ENCODE measurements at regions of chr4 and their contacts with region 1.

Region 1: GRCh38 chr4:26319467-26319948 is 1.3 kb upstream of the RBPJ start:
- DNase-seq: peak; percentile 100
- H3K4me3 ChIP-seq: peak overlapping the region; percentile 76 to 84 (median 79)
- H3K27ac ChIP-seq: peak overlapping the region; percentile 80
- H3K4me1 ChIP-seq: peaks cover 23% of the 10 kb centered on the region
- H3K27me3 ChIP-seq: no peaks in the 10 kb centered on the region
- CTCF ChIP-seq: no peak
- POLR2A ChIP-seq: no peak

Region 2: GRCh38 chr4:25862411-25863346 is 456.8 kb before region 1 on chr4 and contains the start of gene SEL1L3:
- CTCF ChIA-PET with region 1: no interaction called
- POLR2A ChIA-PET with region 1: interaction called, 3 read pairs
- dilution Hi-C with region 1: no loop called
- intact Hi-C with region 1: loop called (anchors 5 kb)
- DNase-seq: no peak
- H3K4me3 ChIP-seq: peak within 1 kb of the TSS; percentile 52 to 92 (median 80)
- H3K27ac ChIP-seq: peak within 1 kb of the TSS; percentile 74
- H3K4me1 ChIP-seq: peaks cover 38% of the 10 kb centered on the region
- H3K27me3 ChIP-seq: no peaks in the 10 kb centered on the region
- CTCF ChIP-seq: no peak
- POLR2A ChIP-seq: no peak
- total RNA-seq, gene SEL1L3: 91.1 and 122 TPM in 2 replicates

Region 3: DNA sequence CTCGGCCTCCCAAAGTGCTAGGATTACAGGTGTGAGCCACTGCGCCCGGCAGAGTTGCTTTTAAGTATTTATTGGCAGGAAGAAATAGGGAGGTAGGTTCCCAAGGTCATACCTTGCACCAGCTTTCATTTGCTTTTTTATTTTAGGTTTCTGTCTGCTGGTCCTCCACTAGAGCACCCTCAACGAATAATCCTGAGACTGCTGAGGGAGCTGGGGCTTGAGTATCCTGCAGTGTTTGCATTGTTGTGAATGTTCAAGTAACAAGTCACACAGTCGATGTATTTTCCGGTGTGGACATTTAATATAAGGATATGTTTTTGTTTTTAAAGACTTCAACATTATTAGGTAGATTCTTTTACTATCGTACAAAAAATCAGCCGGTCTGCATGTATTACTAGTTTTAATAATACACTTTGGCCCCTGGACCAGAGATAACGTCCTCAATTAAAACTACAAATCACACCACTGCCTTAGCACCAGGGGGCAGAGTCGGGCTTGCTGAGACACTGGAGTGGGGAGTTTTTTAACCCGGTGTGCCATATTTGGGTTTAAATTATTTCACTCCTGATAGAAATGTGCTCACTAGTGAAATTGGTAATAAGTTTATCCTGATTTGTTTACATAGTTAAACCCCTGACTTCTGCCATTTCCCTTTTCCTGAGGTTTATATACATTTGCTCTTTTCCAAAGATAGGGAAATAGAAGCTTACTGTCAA is 393.9 kb before region 1 on chr4:
- CTCF ChIA-PET with region 1: no interaction called
- POLR2A ChIA-PET with region 1: no interaction called
- dilution Hi-C with region 1: no loop called
- intact Hi-C with region 1: loop called (anchors 5 kb)
- DNase-seq: peak; percentile 29
- H3K4me3 ChIP-seq: no peak overlapping the region
- H3K27ac ChIP-seq: no peak overlapping the region
- H3K4me1 ChIP-seq: no peaks in the 10 kb centered on the region
- H3K27me3 ChIP-seq: no peaks in the 10 kb centered on the region
- CTCF ChIP-seq: peak; percentile 53 to 58
- POLR2A ChIP-seq: no peak

Region 4: GRCh38 chr4:25986807-25987206 is 332.7 kb before region 1 on chr4:
- CTCF ChIA-PET with region 1: interaction called, 6 read pairs
- POLR2A ChIA-PET with region 1: no interaction called
- dilution Hi-C with region 1: no loop called
- intact Hi-C with region 1: loop called (anchors 5 kb)
- DNase-seq: no peak
- H3K4me3 ChIP-seq: no peak overlapping the region
- H3K27ac ChIP-seq: no peak overlapping the region
- H3K4me1 ChIP-seq: no peaks in the 10 kb centered on the region
- H3K27me3 ChIP-seq: peaks cover 0 to 2% of the 10 kb centered on the region in 2 experiments
- CTCF ChIP-seq: no peak
- POLR2A ChIP-seq: no peak

Region 5: DNA sequence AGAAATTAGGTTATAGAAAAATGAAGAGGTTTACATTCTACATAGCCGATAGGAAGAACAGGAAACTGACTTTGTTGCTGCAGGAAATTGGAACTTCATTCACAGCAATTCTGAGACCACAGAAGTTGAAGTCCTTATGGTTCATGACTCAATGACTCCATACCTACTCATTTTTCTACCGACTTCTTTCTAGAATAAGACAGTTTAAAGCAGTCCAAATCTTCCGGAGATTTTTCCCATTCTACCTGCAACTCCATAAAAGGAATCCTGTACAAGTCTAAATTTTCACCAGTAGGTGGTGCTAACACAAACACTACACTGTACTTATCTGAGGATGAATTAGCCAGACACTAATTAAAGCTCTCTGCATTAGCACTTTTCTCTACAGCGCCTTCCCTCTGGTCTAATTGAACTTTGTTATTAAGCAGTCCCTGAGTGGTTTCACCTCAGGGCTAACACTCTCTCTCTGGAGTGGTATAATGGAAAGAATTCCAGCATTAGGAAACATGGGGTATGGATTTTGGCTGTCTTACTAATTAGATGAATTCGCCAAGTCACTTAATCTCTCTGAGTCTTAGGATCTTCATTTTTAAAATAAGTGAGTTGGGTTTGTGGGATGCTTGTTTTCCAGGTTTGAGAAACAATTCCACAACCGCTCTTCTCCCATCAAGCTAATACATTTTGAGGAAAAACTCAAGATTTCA is 237.6 kb before region 1 on chr4:
- CTCF ChIA-PET with region 1: interaction called, 4 read pairs
- POLR2A ChIA-PET with region 1: no interaction called
- dilution Hi-C with region 1: no loop called
- intact Hi-C with region 1: loop called (anchors 2 kb)
- DNase-seq: peak; percentile 58
- H3K4me3 ChIP-seq: no peak overlapping the region
- H3K27ac ChIP-seq: no peak overlapping the region
- H3K4me1 ChIP-seq: no peaks in the 10 kb centered on the region
- H3K27me3 ChIP-seq: peaks cover 0 to 2% of the 10 kb centered on the region in 2 experiments
- CTCF ChIP-seq: peak; percentile 46 to 51
- POLR2A ChIP-seq: no peak

Region 6: DNA sequence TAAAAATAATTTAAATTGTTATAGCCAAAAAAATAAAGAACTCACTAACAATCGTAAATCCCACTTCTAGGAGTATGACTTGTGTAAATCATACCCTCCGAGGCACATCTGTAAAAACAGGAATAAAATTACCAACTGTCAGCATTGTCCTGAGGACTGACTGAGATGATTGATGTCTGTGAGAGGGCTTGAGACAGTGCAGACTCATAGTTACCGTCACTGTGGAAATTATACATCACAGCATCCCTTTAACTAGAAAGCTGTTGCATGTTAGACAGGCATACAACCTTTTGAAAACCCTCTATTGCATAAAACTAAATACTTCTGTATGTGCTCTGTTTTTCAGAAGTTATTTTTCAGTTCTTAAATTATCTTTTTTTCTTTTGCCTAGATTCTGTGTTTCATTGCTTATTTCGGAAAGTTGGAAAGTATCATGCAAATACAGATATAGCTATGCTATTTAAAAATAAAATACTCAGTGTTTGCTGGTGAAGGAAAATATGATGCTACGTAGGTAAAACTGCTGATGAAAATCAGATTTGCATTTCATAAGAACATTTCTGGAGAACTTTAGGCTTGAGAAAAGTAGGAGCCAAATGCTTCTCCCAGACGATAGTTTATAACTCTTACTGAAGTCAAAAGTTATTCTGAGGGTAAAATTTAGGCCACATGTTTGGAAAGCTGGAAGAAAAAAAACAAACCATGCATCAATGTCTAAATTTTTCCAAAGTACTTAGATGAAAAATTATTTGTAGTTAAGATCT is 12.3 kb before region 1 on chr4:
- CTCF ChIA-PET with region 1: no interaction called
- POLR2A ChIA-PET with region 1: no interaction called
- dilution Hi-C with region 1: no loop called
- intact Hi-C with region 1: no loop called
- DNase-seq: no peak
- H3K4me3 ChIP-seq: no peak overlapping the region
- H3K27ac ChIP-seq: no peak overlapping the region
- H3K4me1 ChIP-seq: no peaks in the 10 kb centered on the region
- H3K27me3 ChIP-seq: no peaks in the 10 kb centered on the region
- CTCF ChIP-seq: no peak
- POLR2A ChIP-seq: no peak

Region 7: DNA sequence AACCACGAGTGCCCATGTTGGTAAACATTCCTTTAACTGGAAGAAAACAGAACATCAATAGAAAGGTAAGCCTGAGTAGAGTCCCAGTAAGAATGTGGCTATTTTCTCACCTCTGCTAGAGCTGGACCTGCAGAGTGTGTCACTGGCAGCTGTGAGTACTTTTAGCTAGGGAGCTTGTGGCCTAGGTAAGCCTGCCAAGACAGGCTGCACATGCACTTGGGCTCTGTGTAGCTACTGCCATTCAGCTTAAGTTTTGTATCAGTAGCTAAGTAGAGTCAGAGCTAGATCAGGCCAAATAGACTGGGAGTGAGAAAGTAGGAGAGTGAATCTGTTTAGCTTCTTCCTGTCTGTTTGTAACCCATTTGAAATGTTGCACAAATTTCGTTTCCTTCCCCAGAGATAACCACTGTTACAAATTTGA is 36.6 kb after region 1 on chr4:
- CTCF ChIA-PET with region 1: no interaction called
- POLR2A ChIA-PET with region 1: no interaction called
- dilution Hi-C with region 1: no loop called
- intact Hi-C with region 1: no loop called
- DNase-seq: no peak
- H3K4me3 ChIP-seq: no peak overlapping the region
- H3K27ac ChIP-seq: no peak overlapping the region
- H3K4me1 ChIP-seq: no peaks in the 10 kb centered on the region
- H3K27me3 ChIP-seq: no peaks in the 10 kb centered on the region
- CTCF ChIP-seq: no peak
- POLR2A ChIP-seq: no peak

Region 8: DNA sequence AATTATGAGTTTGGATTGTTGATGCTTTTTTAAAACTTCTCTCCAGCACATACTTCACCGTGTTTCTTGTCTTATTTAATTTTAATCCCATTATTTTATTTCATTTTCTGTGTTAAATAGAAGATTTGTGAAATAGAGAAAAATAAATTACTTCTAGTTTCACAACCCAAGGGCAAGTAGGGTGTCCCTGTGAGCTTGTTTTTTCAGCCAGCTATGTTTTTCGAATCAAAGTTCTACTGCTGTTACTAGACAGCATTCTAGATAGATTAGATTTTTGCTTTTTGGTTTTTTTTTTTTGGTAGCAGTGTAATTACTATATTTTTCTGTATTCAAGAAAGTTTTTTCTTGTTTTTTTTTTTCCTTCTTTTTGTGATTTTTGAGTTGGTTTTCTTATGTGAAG is 61.2 kb after region 1 on chr4:
- CTCF ChIA-PET with region 1: no interaction called
- POLR2A ChIA-PET with region 1: no interaction called
- dilution Hi-C with region 1: no loop called
- intact Hi-C with region 1: no loop called
- DNase-seq: no peak
- H3K4me3 ChIP-seq: no peak overlapping the region
- H3K27ac ChIP-seq: no peak overlapping the region
- H3K4me1 ChIP-seq: no peaks in the 10 kb centered on the region
- H3K27me3 ChIP-seq: no peaks in the 10 kb centered on the region
- CTCF ChIP-seq: no peak
- POLR2A ChIP-seq: no peak

Region 9: DNA sequence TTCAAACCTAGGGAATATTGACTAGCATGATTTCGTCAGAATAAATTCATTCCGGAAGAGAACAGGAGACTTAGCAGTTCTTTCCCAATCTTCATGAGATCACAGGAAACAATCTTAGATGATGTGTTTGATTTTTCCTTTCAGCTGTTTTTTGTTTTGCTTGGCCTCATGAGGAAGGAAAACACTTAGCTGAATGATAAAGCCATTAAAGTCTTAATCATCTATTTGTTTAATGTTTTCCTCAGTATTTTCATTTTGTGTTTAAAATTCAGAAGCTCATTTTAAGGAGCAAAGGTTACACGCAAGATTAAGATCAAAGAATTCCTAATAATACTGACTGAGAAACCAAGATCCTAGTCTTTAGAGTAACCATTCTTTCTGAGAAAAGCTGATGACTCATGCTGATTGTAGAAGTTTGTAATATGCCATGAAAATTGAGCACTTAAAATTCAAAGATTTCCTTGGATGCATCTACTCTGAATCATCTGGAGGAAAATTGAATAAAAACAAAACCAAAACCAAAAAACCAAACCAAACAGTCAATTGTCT is 249.0 kb after region 1 on chr4:
- CTCF ChIA-PET with region 1: no interaction called
- POLR2A ChIA-PET with region 1: no interaction called
- dilution Hi-C with region 1: no loop called
- intact Hi-C with region 1: loop called (anchors 1 kb)
- DNase-seq: peak; percentile 77
- H3K4me3 ChIP-seq: no peak overlapping the region
- H3K27ac ChIP-seq: no peak overlapping the region
- H3K4me1 ChIP-seq: peaks cover 24% of the 10 kb centered on the region
- H3K27me3 ChIP-seq: peaks cover 10% of the 10 kb centered on the region in 2 experiments
- CTCF ChIP-seq: no peak
- POLR2A ChIP-seq: no peak

Region 10: GRCh38 chr4:26583865-26584652 is 264.6 kb after region 1 on chr4 and contains the start of gene TBC1D19:
- CTCF ChIA-PET with region 1: no interaction called
- POLR2A ChIA-PET with region 1: no interaction called
- dilution Hi-C with region 1: no loop called
- intact Hi-C with region 1: loop called (anchors 5 kb)
- DNase-seq: peak; percentile 85
- H3K4me3 ChIP-seq: peak within 1 kb of the TSS; percentile 52 to 90 (median 89)
- H3K27ac ChIP-seq: no peak within 1 kb of the TSS
- H3K4me1 ChIP-seq: peaks cover 10% of the 10 kb centered on the region
- H3K27me3 ChIP-seq: peaks cover 2 to 9% of the 10 kb centered on the region in 2 experiments
- CTCF ChIP-seq: no peak
- POLR2A ChIP-seq: peak; percentile 46
- total RNA-seq, gene TBC1D19: 5.9 and 6.1 TPM in 2 replicates

Region 11: DNA sequence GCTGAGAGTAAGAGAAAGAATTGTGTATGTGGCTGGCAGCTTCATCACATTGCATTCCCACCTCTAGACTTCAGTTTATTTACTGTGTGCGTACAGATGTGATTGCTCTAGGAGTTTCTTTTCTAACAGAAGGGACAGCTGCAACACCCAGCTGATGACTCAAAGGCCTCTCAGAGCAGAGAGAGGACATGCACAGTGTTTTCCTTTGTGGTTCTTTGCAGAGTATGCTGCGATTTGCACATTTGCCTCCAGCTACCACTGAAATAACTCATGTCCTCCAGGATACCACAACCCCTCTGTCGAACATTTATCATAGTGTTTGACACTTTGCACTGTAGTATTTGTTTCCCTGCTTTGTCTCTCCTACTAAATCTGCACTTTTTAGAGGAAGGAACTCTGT is 835.2 kb after region 1 on chr4:
- CTCF ChIA-PET with region 1: no interaction called
- POLR2A ChIA-PET with region 1: no interaction called
- dilution Hi-C with region 1: no loop called
- intact Hi-C with region 1: no loop called
- DNase-seq: no peak
- H3K4me3 ChIP-seq: no peak overlapping the region
- H3K27ac ChIP-seq: no peak overlapping the region
- H3K4me1 ChIP-seq: no peaks in the 10 kb centered on the region
- H3K27me3 ChIP-seq: no peaks in the 10 kb centered on the region
- CTCF ChIP-seq: no peak
- POLR2A ChIP-seq: no peak